ENCODE measurements at regions of chr2 and their contacts with region 1.

Region 1: GRCh38 chr2:21469158-21469557 is 345.4 kb downstream of the TDRD15 start:
- DNase-seq: no peak
- ATAC-seq: no peak
- H3K4me3 ChIP-seq: no peak overlapping the region
- H3K27ac ChIP-seq: no peak overlapping the region
- H3K4me1 ChIP-seq: no peaks in the 10 kb centered on the region
- H3K27me3 ChIP-seq: no peaks in the 10 kb centered on the region
- CTCF ChIP-seq: no peak

Region 2: DNA sequence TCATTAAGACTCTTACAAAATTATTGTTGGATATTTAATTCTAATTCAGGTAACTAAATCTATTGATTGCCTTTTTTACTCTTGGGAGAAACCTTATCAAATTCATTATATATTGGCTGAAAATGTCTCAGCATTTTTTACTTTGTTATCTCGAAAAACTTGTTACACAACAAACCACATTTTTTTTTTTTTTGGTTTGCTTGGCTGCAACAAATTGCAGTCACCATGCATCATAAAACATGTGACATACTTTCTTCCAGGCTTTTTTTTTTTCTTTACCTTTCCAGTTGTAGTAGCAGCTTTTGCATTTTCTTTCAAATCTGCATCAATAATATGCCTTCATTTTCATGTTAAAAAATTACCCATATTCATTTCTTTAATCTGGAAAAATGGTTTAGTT is 158.7 kb before region 1 on chr2:
- CTCF ChIA-PET with region 1: no interaction called
- POLR2A ChIA-PET with region 1: no interaction called
- in situ Hi-C with region 1: no loop called
- intact Hi-C with region 1: no loop called
- DNase-seq: no peak
- ATAC-seq: no peak
- H3K4me3 ChIP-seq: no peak overlapping the region
- H3K27ac ChIP-seq: no peak overlapping the region
- H3K4me1 ChIP-seq: no peaks in the 10 kb centered on the region
- H3K27me3 ChIP-seq: no peaks in the 10 kb centered on the region
- CTCF ChIP-seq: no peak

Region 3: DNA sequence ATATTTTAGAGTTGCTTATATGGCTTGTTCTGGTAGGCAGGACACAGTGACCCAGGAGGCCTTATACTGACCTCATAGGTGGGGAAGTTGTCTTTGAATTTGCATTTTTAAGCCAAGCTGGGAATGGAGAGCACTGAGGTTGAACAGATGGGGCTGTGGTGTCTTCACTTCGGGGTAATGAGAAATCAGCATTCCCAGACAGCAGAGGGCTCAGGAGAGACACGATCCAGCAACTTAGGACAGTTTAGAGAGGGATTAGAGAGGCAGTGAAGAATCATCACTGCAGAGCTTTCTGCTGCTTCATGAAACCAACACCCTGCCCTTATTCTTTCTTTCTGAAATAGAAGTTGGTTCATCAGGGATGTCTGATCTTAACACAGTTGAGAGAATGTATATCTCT is 143.0 kb before region 1 on chr2:
- CTCF ChIA-PET with region 1: no interaction called
- POLR2A ChIA-PET with region 1: interaction called, 14 read pairs
- in situ Hi-C with region 1: no loop called
- intact Hi-C with region 1: no loop called
- DNase-seq: no peak
- ATAC-seq: no peak
- H3K4me3 ChIP-seq: no peak overlapping the region
- H3K27ac ChIP-seq: no peak overlapping the region
- H3K4me1 ChIP-seq: no peaks in the 10 kb centered on the region
- H3K27me3 ChIP-seq: no peaks in the 10 kb centered on the region
- CTCF ChIP-seq: peak; percentile 13; the same call in 1 of the 2 replicates